ENCODE measurements at regions of chr2 and their contacts with region 1.

Region 1: GRCh38 chr2:55961318-55961911 is 37.8 kb upstream of the EFEMP1 start:
- DNase-seq: no peak
- ATAC-seq: no peak

Region 2: GRCh38 chr2:55771612-55772011 is 189.8 kb before region 1 on chr2:
- intact Hi-C with region 1: loop called (anchors 10 kb)
- DNase-seq: no peak
- ATAC-seq: no peak